Caco-2 (cell line): ENCODE measurements at regions of chrX and their contacts with region 1.

Region 1: DNA sequence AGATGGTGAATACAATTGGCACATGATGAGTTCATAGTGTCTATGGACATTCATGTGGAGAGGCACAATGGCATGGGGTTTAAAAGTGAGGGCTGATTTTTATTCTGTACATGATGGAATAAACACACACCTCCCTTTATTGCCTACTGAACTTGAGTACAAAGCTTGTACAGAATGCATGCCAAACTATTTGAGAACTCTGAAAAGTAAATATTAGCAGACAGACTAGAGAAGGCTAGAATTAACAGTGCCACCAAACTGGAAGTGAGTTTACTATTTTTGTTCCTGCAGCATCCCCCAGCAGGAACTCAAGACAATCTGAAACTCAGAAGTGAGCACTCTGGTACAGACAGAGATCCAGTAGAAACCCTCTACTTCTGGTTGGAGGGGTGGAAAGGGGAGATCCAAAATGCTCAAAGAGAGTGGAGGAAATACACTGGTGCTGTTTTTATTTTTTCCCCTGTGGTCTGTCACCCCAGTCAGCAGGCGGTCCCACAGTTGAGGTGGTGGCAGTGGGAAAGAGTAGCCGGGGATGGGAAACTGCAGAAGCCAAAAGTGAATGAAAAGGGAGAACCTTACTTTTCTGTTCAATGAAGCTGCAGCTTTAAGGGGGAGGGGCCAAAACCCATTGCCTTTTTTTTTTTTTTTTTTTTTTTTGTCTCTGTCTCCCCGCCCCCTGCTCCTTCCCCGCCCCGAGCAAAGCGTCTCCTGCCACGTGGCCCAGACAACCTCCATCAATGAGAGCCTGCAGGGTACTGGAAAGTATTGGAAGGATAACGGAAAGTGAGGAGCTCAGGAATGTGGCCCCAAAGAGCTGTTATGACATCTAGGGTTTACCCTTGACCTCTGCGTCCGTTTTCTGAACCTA is 20.5 kb downstream of the AKAP4 start:
- DNase-seq: peak in 1 of 2 experiments; percentile 5
- H3K4me3 ChIP-seq: no peak overlapping the region
- H3K4me3 Mint-ChIP-seq: peak overlapping the region; percentile 0
- H3K27ac Mint-ChIP-seq: no peak overlapping the region
- H3K4me1 ChIP-seq: no peaks in the 10 kb centered on the region
- H3K4me1 Mint-ChIP-seq: peaks cover 8% of the 10 kb centered on the region
- H3K27me3 ChIP-seq: no peaks in the 10 kb centered on the region
- H3K27me3 Mint-ChIP-seq: no peaks in the 10 kb centered on the region
- CTCF ChIP-seq: no peak

Region 2: GRCh38 chrX:50125480-50125879 is 54.8 kb before region 1 on chrX:
- CTCF ChIA-PET with region 1: no interaction called
- POLR2A ChIA-PET with region 1: no interaction called
- intact Hi-C with region 1: no loop called
- DNase-seq: no peak
- H3K4me3 ChIP-seq: no peak overlapping the region
- H3K4me3 Mint-ChIP-seq: no peak overlapping the region
- H3K27ac Mint-ChIP-seq: no peak overlapping the region
- H3K4me1 ChIP-seq: no peaks in the 10 kb centered on the region
- H3K4me1 Mint-ChIP-seq: no peaks in the 10 kb centered on the region
- H3K27me3 ChIP-seq: no peaks in the 10 kb centered on the region
- H3K27me3 Mint-ChIP-seq: no peaks in the 10 kb centered on the region
- CTCF ChIP-seq: no peak

Region 3: GRCh38 chrX:50626432-50626831 is 446.1 kb after region 1 on chrX:
- CTCF ChIA-PET with region 1: no interaction called
- POLR2A ChIA-PET with region 1: interaction called, 11 read pairs
- intact Hi-C with region 1: no loop called
- DNase-seq: no peak
- H3K4me3 ChIP-seq: no peak overlapping the region
- H3K4me3 Mint-ChIP-seq: no peak overlapping the region
- H3K27ac Mint-ChIP-seq: no peak overlapping the region
- H3K4me1 ChIP-seq: no peaks in the 10 kb centered on the region
- H3K4me1 Mint-ChIP-seq: peaks cover 5% of the 10 kb centered on the region
- H3K27me3 ChIP-seq: no peaks in the 10 kb centered on the region
- H3K27me3 Mint-ChIP-seq: no peaks in the 10 kb centered on the region
- CTCF ChIP-seq: no peak